ENCODE measurements at regions of chr16 and their contacts with region 1.

Region 1: GRCh38 chr16:71499775-71500364 is 10.7 kb upstream of the ZNF19 start:
- DNase-seq: peak in 1 of 2 donors; percentile 15
- ATAC-seq: peak; percentile 72

Region 2: DNA sequence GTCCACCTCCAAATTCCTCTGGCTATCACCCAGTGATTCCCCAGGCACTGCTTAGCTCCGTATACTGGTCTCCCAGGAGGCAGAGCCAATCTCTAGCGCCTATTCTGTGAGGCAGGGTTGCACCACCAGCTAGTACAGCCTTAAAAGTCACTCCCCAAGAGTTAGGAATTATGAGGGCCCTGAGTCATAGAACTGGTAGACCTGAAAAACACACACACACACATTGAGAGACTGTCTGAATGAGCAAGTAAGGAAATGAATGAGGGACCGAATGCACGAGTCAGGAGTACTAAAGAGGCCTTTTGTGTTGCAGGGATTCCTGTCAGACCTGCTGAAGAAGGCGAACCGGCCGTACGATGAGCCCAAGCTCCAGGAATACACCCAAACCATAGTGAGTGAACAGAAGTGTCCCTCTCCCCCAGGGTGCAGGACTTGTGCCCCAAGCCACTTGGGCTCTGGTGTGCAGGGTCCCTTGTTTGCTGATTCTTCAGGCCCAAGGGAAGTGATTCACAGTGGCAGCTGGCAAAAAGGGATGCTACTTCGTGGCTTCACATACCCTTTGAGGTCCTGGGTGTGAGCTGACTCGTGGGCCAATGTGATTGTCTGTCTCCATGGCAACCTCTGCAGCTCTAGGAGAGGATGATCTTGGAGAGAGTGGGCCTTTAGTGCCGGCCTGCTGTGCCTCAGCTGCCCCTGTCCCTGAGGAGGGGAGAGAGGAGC is 116.7 kb before region 1 on chr16:
- intact Hi-C with region 1: no loop called
- DNase-seq: no peak
- ATAC-seq: no peak

Region 3: GRCh38 chr16:71412270-71413160 is 87.4 kb before region 1 on chr16:
- intact Hi-C with region 1: loop called (anchors 5 kb)
- DNase-seq: peak; percentile 47 to 69
- ATAC-seq: peak; percentile 91

Region 4: DNA sequence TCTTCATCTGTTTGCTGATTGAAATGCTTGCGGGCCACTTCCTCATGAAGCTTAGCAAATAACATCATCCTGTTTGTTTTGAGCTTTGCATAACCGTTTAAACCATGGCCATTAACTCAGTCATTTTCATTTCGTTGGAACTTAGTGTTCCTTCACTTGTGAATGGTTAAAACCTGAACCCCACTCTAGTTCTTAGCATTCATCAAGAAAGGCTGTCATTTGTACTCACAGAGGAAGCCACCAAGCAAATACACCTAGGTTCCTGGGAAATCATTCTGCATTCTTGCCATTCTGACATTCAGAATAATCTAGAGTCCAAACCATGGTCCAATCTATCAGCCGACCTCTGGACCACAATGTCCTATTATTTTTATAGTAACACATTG is 85.4 kb after region 1 on chr16:
- intact Hi-C with region 1: no loop called
- DNase-seq: no peak
- ATAC-seq: peak; percentile 78

Region 5: GRCh38 chr16:71669932-71670536 is 170.2 kb after region 1 on chr16:
- intact Hi-C with region 1: no loop called
- DNase-seq: no peak
- ATAC-seq: peak; percentile 27

Region 6: GRCh38 chr16:71754652-71755051 is 254.8 kb after region 1 on chr16:
- intact Hi-C with region 1: no loop called
- DNase-seq: no peak
- ATAC-seq: no peak